ENCODE measurements at regions of chr1 and their contacts with region 1.

Region 1: GRCh38 chr1:23867953-23868556 is at the start of gene FUCA1:
- DNase-seq: peak; percentile 81 to 97
- H3K4me3 ChIP-seq: peak within 1 kb of the TSS; percentile 81 to 88
- H3K27ac ChIP-seq: peak within 1 kb of the TSS; percentile 67 to 82
- H3K4me1 ChIP-seq: peaks cover 0 to 15% of the 10 kb centered on the region in 2 donors
- H3K27me3 ChIP-seq: no peaks in the 10 kb centered on the region
- CTCF ChIP-seq: peak; percentile 94 to 98 (median 96)
- total RNA-seq, gene FUCA1: 11.1 TPM

Region 2: DNA sequence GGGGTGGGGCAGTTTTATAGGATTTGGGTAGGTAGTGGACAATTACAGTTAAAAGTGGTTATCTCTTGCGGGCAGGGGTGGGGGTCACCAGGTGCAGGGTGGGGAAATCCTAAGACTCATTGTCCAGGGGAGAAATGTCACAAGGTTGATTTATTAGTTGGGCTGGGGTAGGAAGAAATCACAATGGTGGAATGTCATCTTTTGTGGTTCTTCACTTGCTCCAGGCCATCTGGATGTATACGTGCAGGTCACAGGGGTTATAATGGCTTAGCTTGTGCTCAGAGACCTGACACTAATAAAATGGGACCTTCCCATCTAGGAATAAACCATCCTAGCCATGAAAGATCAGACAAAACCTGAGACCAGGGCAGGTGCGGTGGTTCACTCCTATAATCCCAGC is 863.9 kb before region 1 on chr1:
- intact Hi-C with region 1: no loop called
- DNase-seq: no peak
- H3K4me3 ChIP-seq: no peak overlapping the region
- H3K27ac ChIP-seq: no peak overlapping the region
- H3K4me1 ChIP-seq: no peaks in the 10 kb centered on the region
- H3K27me3 ChIP-seq: no peaks in the 10 kb centered on the region
- CTCF ChIP-seq: no peak

Region 3: DNA sequence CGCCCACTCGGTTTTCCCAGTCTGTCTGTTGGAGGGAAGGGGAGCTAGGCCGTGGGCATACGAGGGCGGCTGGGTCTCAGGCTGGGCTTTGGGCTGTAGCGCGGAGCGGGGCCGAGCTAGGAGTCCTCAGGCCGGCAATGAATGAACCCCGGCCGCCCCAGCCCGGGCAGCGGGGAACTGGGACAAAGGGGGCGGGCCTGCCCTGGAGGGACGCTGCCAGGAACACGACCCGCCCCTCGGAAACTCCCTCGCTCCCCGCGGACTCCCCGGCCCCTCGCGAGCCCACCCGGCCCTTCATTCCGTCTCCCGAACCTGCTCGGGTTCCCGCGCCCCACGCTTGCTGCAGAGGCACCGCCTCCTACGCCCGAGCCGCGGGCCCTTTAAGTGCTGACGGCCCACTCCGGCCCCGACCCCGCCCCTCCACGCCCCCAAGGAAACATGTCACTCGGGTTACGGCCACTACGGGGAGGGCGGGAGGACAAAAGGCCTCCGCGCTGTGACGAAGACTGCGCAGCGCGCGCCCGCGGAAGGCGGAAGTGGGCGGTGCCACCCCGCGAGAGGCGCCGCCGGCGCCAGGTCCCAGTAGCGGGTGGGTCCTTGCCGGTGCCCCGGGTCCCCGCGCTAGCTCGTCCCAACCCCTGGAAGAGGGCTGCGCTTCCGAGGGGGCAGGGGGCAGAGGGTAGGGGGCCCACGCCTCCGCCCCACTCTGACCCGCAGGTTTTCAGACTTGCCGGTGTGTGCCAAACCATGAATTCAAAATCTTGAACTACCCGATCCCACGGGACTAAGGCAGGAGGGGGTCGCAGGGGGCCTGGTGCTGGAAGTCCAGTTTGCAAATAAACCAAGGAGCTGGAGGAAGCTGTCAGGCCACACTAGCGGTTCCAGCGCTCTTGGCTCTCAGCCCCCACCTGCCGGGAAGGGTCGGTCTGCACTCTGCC is 67.4 kb before region 1 on chr1 and contains the start of gene GALE:
- intact Hi-C with region 1: loop called (anchors 5 kb)
- DNase-seq: peak; percentile 87 to 98
- H3K4me3 ChIP-seq: peak within 1 kb of the TSS; percentile 82 to 93
- H3K27ac ChIP-seq: peak within 1 kb of the TSS; percentile 87 to 97
- H3K4me1 ChIP-seq: peaks cover 9 to 14% of the 10 kb centered on the region in 2 donors
- H3K27me3 ChIP-seq: no peaks in the 10 kb centered on the region
- CTCF ChIP-seq: no peak
- total RNA-seq, gene GALE: 30.4 TPM

Region 4: GRCh38 chr1:23916209-23917131 is 48.4 kb after region 1 on chr1:
- intact Hi-C with region 1: loop called (anchors 10 kb)
- DNase-seq: peak; percentile 15 to 78
- H3K4me3 ChIP-seq: no peak overlapping the region
- H3K27ac ChIP-seq: no peak overlapping the region
- H3K4me1 ChIP-seq: peaks cover 0 to 17% of the 10 kb centered on the region in 2 donors
- H3K27me3 ChIP-seq: no peaks in the 10 kb centered on the region
- CTCF ChIP-seq: peak; percentile 30 to 69 (median 61)

Region 5: DNA sequence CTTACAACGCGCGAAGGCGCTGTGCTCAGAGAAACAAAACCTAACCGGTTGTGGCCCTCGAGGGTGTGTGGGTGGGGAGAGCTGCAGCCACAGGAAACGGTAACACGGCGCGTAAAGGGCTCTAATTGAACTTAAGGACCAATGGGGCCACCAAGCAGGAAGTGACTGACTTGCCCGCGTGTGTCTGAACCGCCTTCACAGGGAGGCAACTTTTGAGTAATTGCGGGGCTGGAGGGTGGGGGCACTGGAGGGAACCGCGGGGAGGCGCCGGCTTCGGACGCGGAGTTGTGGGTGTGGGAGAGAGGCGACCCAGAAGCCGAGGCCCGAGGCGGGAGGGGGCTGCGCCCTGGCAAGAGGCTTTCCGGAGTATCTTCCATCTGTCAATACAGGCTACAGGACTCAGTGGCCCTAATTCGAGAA is 91.0 kb after region 1 on chr1:
- intact Hi-C with region 1: loop called (anchors 2 kb)
- DNase-seq: peak; percentile 88 to 95
- H3K4me3 ChIP-seq: peak overlapping the region; percentile 76 to 81
- H3K27ac ChIP-seq: peak overlapping the region; percentile 97 to 98
- H3K4me1 ChIP-seq: peaks cover 0 to 7% of the 10 kb centered on the region in 2 donors
- H3K27me3 ChIP-seq: no peaks in the 10 kb centered on the region
- CTCF ChIP-seq: peak in 2 of 3 experiments; percentile 35 to 57

Region 6: DNA sequence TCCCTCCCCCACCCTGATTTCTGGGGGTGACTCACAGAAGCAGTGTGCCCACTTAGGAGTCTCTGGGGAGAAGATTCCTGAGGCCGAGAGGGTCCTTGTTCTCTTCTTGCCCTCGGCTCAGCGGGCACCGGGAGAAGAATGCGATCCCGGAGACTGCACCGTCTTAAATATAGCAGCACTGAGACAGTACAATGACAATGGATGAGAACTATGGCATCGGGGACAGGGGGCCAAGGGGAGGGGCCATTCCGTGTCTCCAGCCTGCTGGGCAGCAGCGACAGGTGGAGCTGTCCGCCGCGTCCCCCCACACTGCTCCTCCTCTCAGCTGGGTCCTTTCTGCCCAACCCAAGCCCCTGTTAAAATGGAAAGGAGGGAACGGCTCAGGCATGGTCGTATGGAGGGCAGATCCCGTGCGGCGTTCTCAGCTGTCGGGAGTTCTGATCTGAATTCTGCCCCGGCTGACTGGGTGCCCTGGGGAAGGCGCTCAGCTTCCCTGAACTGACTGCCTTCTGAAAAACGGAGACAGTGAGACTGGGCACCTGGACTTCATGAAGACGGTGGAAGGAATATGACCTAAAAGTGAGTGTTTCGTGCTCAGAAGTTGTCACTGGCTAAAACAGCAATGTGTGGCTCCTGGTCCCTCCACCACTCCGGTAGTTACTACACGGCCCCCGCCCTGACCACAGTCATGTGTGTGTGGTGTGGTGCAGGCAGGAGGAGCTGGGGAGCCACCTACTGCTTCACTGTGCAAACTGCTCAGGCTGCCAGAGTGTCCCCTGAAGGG is 244.1 kb after region 1 on chr1 and contains the start of gene MYOM3:
- intact Hi-C with region 1: loop called (anchors 2 kb)
- DNase-seq: peak; percentile 46 to 88
- H3K4me3 ChIP-seq: peak within 1 kb of the TSS; percentile 42 to 57
- H3K27ac ChIP-seq: peak within 1 kb of the TSS; percentile 89 to 96
- H3K4me1 ChIP-seq: peaks cover 12 to 21% of the 10 kb centered on the region in 2 donors
- H3K27me3 ChIP-seq: no peaks in the 10 kb centered on the region
- CTCF ChIP-seq: peak; percentile 66 to 82 (median 73)
- total RNA-seq, gene MYOM3: 1.2 TPM

Measured in ascending aorta (tissue), 2 donors.